A549 (cell line): ENCODE measurements at regions of chr3 and their contacts with region 1.

Region 1: GRCh38 chr3:113051302-113051711 is 60.5 kb downstream of the GTPBP8 start:
- DNase-seq: peak; percentile 74 to 76
- ATAC-seq: peak; percentile 81 to 92
- H3K4me3 ChIP-seq: no peak overlapping the region
- H3K27ac ChIP-seq: peak overlapping the region; percentile 46 to 71; a peak in 5 of 6 replicates
- H3K4me1 ChIP-seq: peaks cover 34% of the 10 kb centered on the region
- CTCF ChIP-seq: peak; percentile 95
- EP300 ChIP-seq: no peak
- POLR2A ChIP-seq: no peak
- RAD21 ChIP-seq: peak; percentile 97 to 99

Region 2: GRCh38 chr3:112894258-112894657 is 157.0 kb before region 1 on chr3:
- CTCF ChIA-PET with region 1: no interaction called
- POLR2A ChIA-PET with region 1: no interaction called
- DNase-seq: peak in 1 of 2 experiments; percentile 59
- ATAC-seq: peak in 1 of 2 experiments; percentile 65; a peak in 3 of 6 replicates
- H3K4me3 ChIP-seq: no peak overlapping the region
- H3K27ac ChIP-seq: peak overlapping the region; percentile 40 to 74; a peak in 4 of 6 replicates
- H3K4me1 ChIP-seq: peaks cover 5% of the 10 kb centered on the region; the same call in 1 of the 3 replicates
- CTCF ChIP-seq: no peak
- EP300 ChIP-seq: no peak
- POLR2A ChIP-seq: no peak
- RAD21 ChIP-seq: no peak

Region 3: GRCh38 chr3:112979240-112979832 is 72.0 kb before region 1 on chr3:
- CTCF ChIA-PET with region 1: no interaction called
- POLR2A ChIA-PET with region 1: no interaction called
- DNase-seq: peak; percentile 21 to 42
- ATAC-seq: no peak
- H3K4me3 ChIP-seq: no peak overlapping the region
- H3K27ac ChIP-seq: peak overlapping the region; percentile 2 to 25; a peak in 3 of 6 replicates
- H3K4me1 ChIP-seq: peaks cover 8% of the 10 kb centered on the region; the same call in 1 of the 3 replicates
- CTCF ChIP-seq: peak; percentile 83
- EP300 ChIP-seq: no peak
- POLR2A ChIP-seq: no peak
- RAD21 ChIP-seq: peak; percentile 74 to 83

Region 4: DNA sequence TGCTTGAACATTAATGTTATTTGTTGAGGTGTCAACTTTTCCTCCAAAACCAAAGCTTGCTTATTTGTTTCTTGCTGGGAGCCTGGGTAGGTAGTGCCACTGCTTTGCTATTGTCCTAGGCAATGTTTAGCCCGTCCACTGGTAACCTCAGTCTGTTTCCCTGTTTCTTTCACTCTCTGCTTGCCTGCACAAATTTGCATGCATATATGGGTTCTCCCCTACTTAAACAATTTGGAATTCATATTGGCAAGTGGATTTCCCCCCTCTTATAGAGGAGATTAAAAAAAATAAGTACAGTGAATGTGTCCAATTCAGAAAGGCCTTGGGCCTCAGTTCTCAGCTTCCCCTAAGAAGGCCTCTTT is 115.0 kb after region 1 on chr3:
- CTCF ChIA-PET with region 1: no interaction called
- POLR2A ChIA-PET with region 1: no interaction called
- DNase-seq: no peak
- ATAC-seq: no peak
- H3K4me3 ChIP-seq: no peak overlapping the region
- H3K27ac ChIP-seq: no peak overlapping the region
- H3K4me1 ChIP-seq: no peaks in the 10 kb centered on the region
- CTCF ChIP-seq: no peak
- EP300 ChIP-seq: no peak
- POLR2A ChIP-seq: no peak
- RAD21 ChIP-seq: no peak

Region 5: GRCh38 chr3:113275929-113276750 is 224.8 kb after region 1 on chr3:
- CTCF ChIA-PET with region 1: interaction called, 21 read pairs
- POLR2A ChIA-PET with region 1: no interaction called
- DNase-seq: no peak
- ATAC-seq: no peak; a peak in 1 of 6 replicates
- H3K4me3 ChIP-seq: no peak overlapping the region
- H3K27ac ChIP-seq: peak overlapping the region in 1 of 2 experiments; percentile 10; a peak in 1 of 6 replicates
- H3K4me1 ChIP-seq: no peaks in the 10 kb centered on the region
- CTCF ChIP-seq: no peak
- EP300 ChIP-seq: no peak
- POLR2A ChIP-seq: no peak
- RAD21 ChIP-seq: no peak

Region 6: DNA sequence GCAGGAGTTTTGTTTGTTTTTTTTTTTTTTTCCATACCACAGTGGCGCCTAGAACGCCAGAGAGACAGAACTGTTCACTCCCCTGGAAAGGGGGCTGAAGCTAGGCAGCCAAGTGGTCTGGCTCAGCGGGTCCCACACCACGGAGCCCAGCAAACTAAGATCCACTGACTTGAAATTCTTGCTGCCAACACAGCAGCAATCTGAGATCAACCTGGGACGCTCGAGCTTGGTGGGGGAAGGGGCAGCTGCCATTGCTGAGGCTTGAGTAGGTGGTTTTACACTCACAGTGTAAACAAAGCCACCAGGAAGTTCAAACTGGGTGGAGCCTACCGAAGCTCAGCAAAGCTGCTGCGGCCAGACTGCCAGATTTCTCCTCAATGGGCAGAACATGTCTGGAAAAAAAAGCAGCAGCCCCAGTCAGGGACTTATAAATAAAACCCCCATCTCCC is 433.9 kb after region 1 on chr3:
- CTCF ChIA-PET with region 1: no interaction called
- POLR2A ChIA-PET with region 1: no interaction called
- DNase-seq: no peak
- ATAC-seq: no peak
- H3K4me3 ChIP-seq: no peak overlapping the region
- H3K27ac ChIP-seq: no peak overlapping the region
- H3K4me1 ChIP-seq: no peaks in the 10 kb centered on the region
- CTCF ChIP-seq: no peak
- EP300 ChIP-seq: no peak
- POLR2A ChIP-seq: no peak
- RAD21 ChIP-seq: no peak

Region 7: GRCh38 chr3:113626503-113627371 is 575.4 kb after region 1 on chr3:
- CTCF ChIA-PET with region 1: interaction called, 10 read pairs
- POLR2A ChIA-PET with region 1: no interaction called
- DNase-seq: peak; percentile 72 to 82
- ATAC-seq: peak; percentile 94 to 99
- H3K4me3 ChIP-seq: no peak overlapping the region
- H3K27ac ChIP-seq: no peak overlapping the region
- H3K4me1 ChIP-seq: no peaks in the 10 kb centered on the region
- CTCF ChIP-seq: peak; percentile 98
- EP300 ChIP-seq: no peak
- POLR2A ChIP-seq: no peak
- RAD21 ChIP-seq: peak; percentile 97